ENCODE measurements at regions of chr4 and their contacts with region 1.

Region 1: DNA sequence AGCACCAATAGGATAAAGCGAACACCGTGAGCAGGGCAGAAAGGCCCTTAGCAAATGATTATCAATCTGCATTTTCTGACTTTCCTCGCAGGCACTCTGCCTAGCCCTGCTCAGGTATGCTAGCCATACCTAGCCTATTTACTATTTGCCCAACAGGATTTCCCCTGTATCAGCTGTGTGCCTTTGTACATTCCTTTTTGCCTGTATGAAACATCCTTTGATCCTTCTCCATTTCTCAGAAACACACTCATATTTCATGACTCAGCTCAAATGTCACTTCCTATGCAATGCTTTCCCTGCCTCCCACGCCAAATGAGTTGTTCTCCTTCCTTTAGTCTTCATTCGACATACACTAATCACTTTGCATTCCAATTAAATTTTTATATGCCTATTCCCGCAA is 37.2 kb downstream of the PCDH7 start:
- DNase-seq: peak; percentile 52 to 89
- H3K4me3 ChIP-seq: peak overlapping the region; percentile 4; the same call in 1 of the 2 replicates
- H3K27ac ChIP-seq: peak overlapping the region; percentile 83
- H3K4me1 ChIP-seq: peaks cover 44% of the 10 kb centered on the region
- H3K27me3 ChIP-seq: no peaks in the 10 kb centered on the region
- CTCF ChIP-seq: no peak

Region 2: DNA sequence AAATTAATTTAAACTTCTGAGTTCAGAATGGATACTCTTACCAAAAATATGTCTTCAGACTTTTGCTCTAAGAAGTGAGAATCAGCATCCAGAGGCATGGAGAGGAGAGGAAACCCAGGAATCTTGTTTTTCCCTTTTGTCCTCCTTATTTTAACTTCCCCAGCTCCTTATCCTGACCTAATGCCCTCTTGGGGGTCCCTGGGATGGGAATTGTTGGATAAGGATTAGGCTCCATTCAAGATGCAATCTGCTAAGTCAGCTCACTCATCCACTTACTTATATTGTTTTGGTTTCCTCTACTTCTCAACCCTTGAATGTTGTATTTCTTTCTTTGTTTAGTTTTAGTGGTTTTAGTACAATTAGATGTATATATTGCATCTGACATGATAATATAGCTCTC is 245.6 kb before region 1 on chr4:
- CTCF ChIA-PET with region 1: no interaction called
- POLR2A ChIA-PET with region 1: no interaction called
- intact Hi-C with region 1: no loop called
- DNase-seq: no peak
- H3K4me3 ChIP-seq: no peak overlapping the region
- H3K27ac ChIP-seq: no peak overlapping the region
- H3K4me1 ChIP-seq: no peaks in the 10 kb centered on the region
- H3K27me3 ChIP-seq: no peaks in the 10 kb centered on the region
- CTCF ChIP-seq: no peak

Region 3: GRCh38 chr4:30950737-30951136 is 193.4 kb after region 1 on chr4:
- CTCF ChIA-PET with region 1: no interaction called
- POLR2A ChIA-PET with region 1: no interaction called
- intact Hi-C with region 1: loop called (anchors 1 kb)
- DNase-seq: peak; percentile 54 to 98
- H3K4me3 ChIP-seq: no peak overlapping the region
- H3K27ac ChIP-seq: peak overlapping the region; percentile 48; the same call in 1 of the 2 replicates
- H3K4me1 ChIP-seq: peaks cover 58% of the 10 kb centered on the region
- H3K27me3 ChIP-seq: no peaks in the 10 kb centered on the region
- CTCF ChIP-seq: no peak

Measured in PC-9 (cell line).